Endothelial cell of umbilical vein (primary cell): ENCODE measurements at regions of chr1 and their contacts with region 1.

Region 1: GRCh38 chr1:172826096-172826743 is 167.3 kb downstream of the FASLG start:
- DNase-seq: peak; percentile 80
- H3K4me3 ChIP-seq: no peak overlapping the region
- H3K27ac ChIP-seq: peak overlapping the region; percentile 72
- H3K4me1 ChIP-seq: peaks cover 8% of the 10 kb centered on the region
- H3K27me3 ChIP-seq: no peaks in the 10 kb centered on the region
- CTCF ChIP-seq: peak; percentile 50 to 51
- POLR2A ChIP-seq: no peak

Region 2: GRCh38 chr1:172906778-172907592 is 80.8 kb after region 1 on chr1:
- CTCF ChIA-PET with region 1: interaction called, 21 read pairs
- POLR2A ChIA-PET with region 1: interaction called, 3 read pairs
- dilution Hi-C with region 1: no loop called
- intact Hi-C with region 1: loop called (anchors 1 kb)
- DNase-seq: peak; percentile 96
- H3K4me3 ChIP-seq: no peak overlapping the region
- H3K27ac ChIP-seq: peak overlapping the region; percentile 88
- H3K4me1 ChIP-seq: peaks cover 84% of the 10 kb centered on the region
- H3K27me3 ChIP-seq: no peaks in the 10 kb centered on the region
- CTCF ChIP-seq: no peak
- POLR2A ChIP-seq: peak; percentile 58

Region 3: GRCh38 chr1:172934417-172934762 is 108.2 kb after region 1 on chr1:
- CTCF ChIA-PET with region 1: interaction called, 15 read pairs
- POLR2A ChIA-PET with region 1: no interaction called
- dilution Hi-C with region 1: no loop called
- intact Hi-C with region 1: loop called (anchors 1 kb)
- DNase-seq: no peak
- H3K4me3 ChIP-seq: no peak overlapping the region
- H3K27ac ChIP-seq: peak overlapping the region; percentile 90
- H3K4me1 ChIP-seq: peaks cover 53% of the 10 kb centered on the region
- H3K27me3 ChIP-seq: no peaks in the 10 kb centered on the region
- CTCF ChIP-seq: no peak
- POLR2A ChIP-seq: no peak

Region 4: DNA sequence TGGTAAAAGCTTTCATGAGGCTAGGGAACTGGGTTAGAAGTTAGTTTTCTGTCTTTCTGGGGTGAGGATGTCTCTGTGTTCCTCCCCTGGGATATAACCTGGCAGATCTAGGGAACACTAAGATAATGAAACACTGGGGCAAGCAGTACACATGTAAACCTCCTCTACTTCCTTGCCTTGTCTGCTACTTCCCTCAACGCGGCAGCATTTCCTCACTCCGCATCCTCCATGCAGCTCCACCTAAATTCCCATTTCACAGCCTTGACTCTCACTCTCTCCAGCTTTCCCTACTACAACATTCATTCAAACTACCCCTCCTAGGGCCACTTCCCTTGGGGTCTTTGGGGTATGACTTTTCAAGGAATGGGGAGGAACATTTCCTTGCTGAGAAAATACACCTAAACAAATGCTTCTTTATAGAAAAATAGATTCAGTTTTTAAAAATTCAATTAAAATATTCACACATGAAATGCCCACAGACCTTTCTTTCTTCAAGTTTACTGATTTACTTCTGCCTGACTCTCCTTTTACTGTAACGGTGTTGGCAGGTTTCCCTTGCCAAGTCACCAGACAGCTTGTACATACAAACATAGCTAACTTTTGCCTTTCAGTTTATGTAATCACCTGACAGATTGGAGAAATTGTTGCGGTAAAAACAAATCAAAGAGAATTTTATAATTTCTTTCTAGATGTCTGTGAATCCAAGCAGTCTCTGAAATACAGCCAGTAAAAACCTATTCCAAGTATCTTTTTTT is 134.4 kb after region 1 on chr1:
- CTCF ChIA-PET with region 1: interaction called, 10 read pairs
- POLR2A ChIA-PET with region 1: interaction called, 3 read pairs
- dilution Hi-C with region 1: no loop called
- intact Hi-C with region 1: loop called (anchors 1 kb)
- DNase-seq: no peak
- H3K4me3 ChIP-seq: no peak overlapping the region
- H3K27ac ChIP-seq: peak overlapping the region; percentile 10
- H3K4me1 ChIP-seq: peaks cover 31% of the 10 kb centered on the region
- H3K27me3 ChIP-seq: no peaks in the 10 kb centered on the region
- CTCF ChIP-seq: peak in 1 of 2 donors; percentile 13
- POLR2A ChIP-seq: no peak

Region 5: GRCh38 chr1:173112129-173112528 is 285.9 kb after region 1 on chr1:
- CTCF ChIA-PET with region 1: interaction called, 3 read pairs
- POLR2A ChIA-PET with region 1: no interaction called
- dilution Hi-C with region 1: no loop called
- intact Hi-C with region 1: loop called (anchors 2 kb)
- DNase-seq: peak; percentile 76
- H3K4me3 ChIP-seq: no peak overlapping the region
- H3K27ac ChIP-seq: peak overlapping the region; percentile 58
- H3K4me1 ChIP-seq: peaks cover 29% of the 10 kb centered on the region
- H3K27me3 ChIP-seq: no peaks in the 10 kb centered on the region
- CTCF ChIP-seq: no peak
- POLR2A ChIP-seq: no peak

Region 6: GRCh38 chr1:173255214-173255813 is 429.1 kb after region 1 on chr1:
- CTCF ChIA-PET with region 1: interaction called, 4 read pairs
- POLR2A ChIA-PET with region 1: no interaction called
- dilution Hi-C with region 1: no loop called
- intact Hi-C with region 1: loop called (anchors 5 kb)
- DNase-seq: peak; percentile 56
- H3K4me3 ChIP-seq: no peak overlapping the region
- H3K27ac ChIP-seq: no peak overlapping the region
- H3K4me1 ChIP-seq: no peaks in the 10 kb centered on the region
- H3K27me3 ChIP-seq: no peaks in the 10 kb centered on the region
- CTCF ChIP-seq: peak; percentile 61 to 66
- POLR2A ChIP-seq: no peak